ENCODE measurements at regions of chr3 and their contacts with region 1.

Region 1: DNA sequence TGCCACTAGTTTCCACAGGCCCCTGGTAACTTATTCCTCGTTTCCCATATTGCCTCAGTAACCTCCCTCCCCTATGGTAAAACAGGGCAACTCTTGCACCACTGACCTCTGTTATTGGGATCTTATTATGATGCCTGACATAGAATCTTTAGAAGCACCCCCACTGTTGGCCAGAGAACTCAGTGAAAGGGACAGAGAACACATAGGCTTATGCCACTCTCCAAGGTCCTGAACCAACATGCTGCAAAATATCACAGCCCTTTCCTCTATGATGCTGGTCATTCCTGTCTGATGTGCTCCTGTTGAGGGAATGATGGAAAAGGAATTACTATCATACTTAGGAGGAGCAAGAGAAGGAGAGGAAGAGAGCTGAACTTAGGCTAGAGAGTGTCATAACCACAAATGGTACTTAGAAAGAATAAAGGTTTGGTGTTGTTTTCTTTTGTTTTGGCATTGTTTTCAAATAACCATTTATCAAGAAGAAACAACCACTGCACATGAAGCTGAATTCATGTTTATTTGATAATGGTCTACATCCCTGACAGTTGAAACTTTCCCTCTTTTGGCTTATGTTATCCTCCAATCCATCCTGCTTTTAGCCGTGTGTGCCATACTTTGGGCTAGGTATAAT is 330.2 kb downstream of the EPHB1 start:
- DNase-seq: no peak

Region 2: DNA sequence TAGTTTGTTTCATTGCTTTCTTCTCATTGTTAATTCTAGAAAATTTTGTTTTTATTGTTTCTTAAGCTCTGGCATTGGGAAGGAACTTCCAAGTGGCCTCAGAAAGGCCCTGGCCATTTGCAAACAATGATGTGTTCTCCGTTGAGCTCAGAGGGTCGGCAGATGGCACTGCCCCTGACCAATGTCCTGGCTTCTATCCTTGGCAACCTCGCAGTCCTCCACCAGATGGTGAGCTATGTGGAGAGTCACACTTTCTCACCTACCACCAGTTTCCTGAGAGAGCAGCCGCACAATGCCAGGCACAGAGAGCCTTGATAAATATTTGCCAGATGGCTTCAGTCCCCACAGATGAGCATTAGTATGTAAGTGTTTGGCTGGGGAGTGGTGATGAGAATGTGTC is 13.5 kb after region 1 on chr3:
- intact Hi-C with region 1: loop called in 1 of 2 experiments (anchors 1 kb)
- DNase-seq: no peak

Region 3: GRCh38 chr3:135182364-135182998 is 57.2 kb after region 1 on chr3:
- intact Hi-C with region 1: loop called in 1 of 2 experiments (anchors 10 kb)
- DNase-seq: no peak

Region 4: DNA sequence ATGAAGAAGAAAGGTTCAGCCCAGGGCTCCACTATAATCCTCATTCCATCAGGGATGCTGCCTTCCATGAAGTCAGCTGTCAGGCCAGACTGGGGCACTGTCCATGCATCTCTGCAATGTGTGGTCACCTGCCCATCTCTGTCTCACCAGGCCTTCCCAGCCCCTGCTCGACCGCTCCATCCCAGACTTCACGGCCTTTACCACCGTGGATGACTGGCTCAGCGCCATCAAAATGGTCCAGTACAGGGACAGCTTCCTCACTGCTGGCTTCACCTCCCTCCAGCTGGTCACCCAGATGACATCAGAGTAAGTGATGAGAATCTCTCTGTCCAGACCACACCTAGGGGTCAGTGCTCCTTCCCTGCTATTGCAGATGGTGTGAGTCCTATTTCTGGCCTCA is 123.9 kb after region 1 on chr3:
- intact Hi-C with region 1: no loop called
- DNase-seq: no peak